ENCODE measurements at regions of chr9 and their contacts with region 1.

Region 1: GRCh38 chr9:130847327-130848217 is 12.5 kb downstream of the ABL1 start:
- DNase-seq: no peak

Region 2: GRCh38 chr9:130834371-130835311 is 12.9 kb before region 1 on chr9 and contains the start of gene ABL1:
- intact Hi-C with region 1: loop called (anchors 1 kb)
- DNase-seq: peak; percentile 33 to 92 (median 59)

Measured in posterior cingulate gyrus (tissue), 11 donors.